Right ventricle myocardium superior (tissue), 1 donor: ENCODE measurements at regions of chr14 and their contacts with region 1.

Region 1: GRCh38 chr14:94036313-94037050 is 10.3 kb downstream of the OTUB2 start:
- DNase-seq: peak; percentile 75
- ATAC-seq: peak; percentile 91

Region 2: DNA sequence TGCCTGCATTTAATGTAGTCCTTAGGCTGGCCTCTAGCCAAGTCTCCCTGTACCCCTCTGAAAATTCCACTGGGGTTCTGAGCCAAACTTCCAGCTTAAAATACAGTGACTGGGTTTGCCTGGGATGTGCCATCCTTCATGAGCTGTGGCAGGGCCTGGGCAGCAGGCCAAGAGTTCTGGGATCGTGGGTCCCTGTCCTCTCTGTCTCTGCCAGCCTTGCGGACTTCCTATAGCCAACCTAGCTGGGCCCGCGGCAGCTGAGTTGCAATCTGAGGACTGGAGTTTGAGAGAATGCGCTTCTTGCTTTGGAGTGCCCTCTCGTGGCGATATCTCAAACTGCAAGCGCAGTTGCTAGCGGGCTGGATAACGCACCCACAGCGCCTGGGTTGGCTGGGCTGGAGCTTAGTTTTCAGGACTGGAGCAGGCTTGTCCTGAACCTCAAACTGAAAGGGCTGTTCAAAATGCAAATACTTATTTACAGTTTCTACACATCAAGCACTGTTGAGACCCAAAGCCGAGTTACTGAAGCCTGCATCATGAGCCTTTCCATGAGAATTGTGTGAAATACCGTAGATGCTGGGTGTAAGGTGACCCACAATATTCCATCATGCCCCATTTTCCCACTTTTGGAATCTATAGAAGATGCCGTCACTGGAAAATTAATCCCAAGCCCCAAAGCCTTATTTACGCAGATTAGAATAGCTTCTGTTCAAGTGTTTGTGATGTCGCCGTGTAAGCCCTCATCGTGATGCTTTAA is 100.3 kb after region 1 on chr14:
- intact Hi-C with region 1: loop called (anchors 5 kb)
- DNase-seq: peak; percentile 93
- ATAC-seq: peak; percentile 97

Region 3: DNA sequence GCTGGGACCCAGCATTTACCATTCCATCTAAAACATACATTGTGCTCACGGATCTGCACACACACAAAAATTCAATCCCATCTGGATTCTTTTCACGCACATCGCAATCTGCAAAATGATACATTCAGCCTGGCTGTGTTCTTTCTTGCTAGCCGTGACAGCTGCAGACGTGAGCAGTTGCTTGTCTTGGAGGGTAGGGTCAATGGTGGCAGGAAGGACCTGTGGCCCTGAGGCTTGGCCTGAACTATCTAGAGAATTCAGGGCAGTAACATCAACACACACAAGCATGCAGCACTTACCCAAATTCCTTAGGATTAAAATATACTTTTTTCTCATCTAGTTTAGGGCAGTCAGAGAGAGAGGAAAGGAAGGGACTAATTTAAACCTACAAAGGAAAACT is 1048.8 kb after region 1 on chr14:
- intact Hi-C with region 1: no loop called
- DNase-seq: no peak
- ATAC-seq: no peak